CD8-positive, alpha-beta T cell (primary cell): ENCODE measurements at regions of chr6 and their contacts with region 1.

Region 1: GRCh38 chr6:110981202-110981600 is 637 bp upstream of the RPF2 start:
- DNase-seq: peak in 1 of 9 experiments; percentile 49
- ATAC-seq: peak; percentile 1
- H3K4me3 ChIP-seq: peak overlapping the region; percentile 85 to 95
- H3K4me3 Mint-ChIP-seq: peak overlapping the region; percentile 99
- H3K27ac ChIP-seq: peak overlapping the region; percentile 90 to 97
- H3K27ac Mint-ChIP-seq: peak overlapping the region; percentile 100
- H3K4me1 ChIP-seq: peaks cover 6% of the 10 kb centered on the region
- H3K4me1 Mint-ChIP-seq: peaks cover 45% of the 10 kb centered on the region
- H3K27me3 ChIP-seq: no peaks in the 10 kb centered on the region
- H3K27me3 Mint-ChIP-seq: no peaks in the 10 kb centered on the region
- CTCF ChIP-seq: no peak

Region 2: DNA sequence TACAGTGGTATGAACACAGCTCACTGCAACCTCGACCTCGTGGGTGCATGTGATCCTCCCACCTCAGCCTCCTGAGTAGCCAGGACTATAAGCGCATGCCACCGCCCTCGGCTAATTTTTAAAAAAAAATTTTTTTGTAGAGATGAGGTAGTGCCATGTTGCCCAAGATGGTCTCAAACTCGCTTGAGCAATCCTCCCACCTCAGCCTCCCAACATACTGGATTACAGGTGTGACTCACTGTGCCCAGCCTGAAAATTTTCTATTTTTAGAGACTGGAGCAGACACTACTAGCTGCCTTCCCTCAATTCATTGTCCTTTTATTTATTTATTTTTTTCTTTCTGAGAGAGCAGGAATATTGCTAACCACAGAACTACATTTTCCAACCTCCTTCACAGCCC is 43.0 kb before region 1 on chr6:
- CTCF ChIA-PET with region 1: no interaction called
- POLR2A ChIA-PET with region 1: no interaction called
- intact Hi-C with region 1: no loop called
- DNase-seq: no peak
- ATAC-seq: no peak
- H3K4me3 ChIP-seq: no peak overlapping the region
- H3K4me3 Mint-ChIP-seq: no peak overlapping the region
- H3K27ac ChIP-seq: no peak overlapping the region
- H3K27ac Mint-ChIP-seq: no peak overlapping the region
- H3K4me1 ChIP-seq: no peaks in the 10 kb centered on the region
- H3K4me1 Mint-ChIP-seq: no peaks in the 10 kb centered on the region
- H3K27me3 ChIP-seq: no peaks in the 10 kb centered on the region
- H3K27me3 Mint-ChIP-seq: peaks cover 2% of the 10 kb centered on the region
- CTCF ChIP-seq: no peak

Region 3: DNA sequence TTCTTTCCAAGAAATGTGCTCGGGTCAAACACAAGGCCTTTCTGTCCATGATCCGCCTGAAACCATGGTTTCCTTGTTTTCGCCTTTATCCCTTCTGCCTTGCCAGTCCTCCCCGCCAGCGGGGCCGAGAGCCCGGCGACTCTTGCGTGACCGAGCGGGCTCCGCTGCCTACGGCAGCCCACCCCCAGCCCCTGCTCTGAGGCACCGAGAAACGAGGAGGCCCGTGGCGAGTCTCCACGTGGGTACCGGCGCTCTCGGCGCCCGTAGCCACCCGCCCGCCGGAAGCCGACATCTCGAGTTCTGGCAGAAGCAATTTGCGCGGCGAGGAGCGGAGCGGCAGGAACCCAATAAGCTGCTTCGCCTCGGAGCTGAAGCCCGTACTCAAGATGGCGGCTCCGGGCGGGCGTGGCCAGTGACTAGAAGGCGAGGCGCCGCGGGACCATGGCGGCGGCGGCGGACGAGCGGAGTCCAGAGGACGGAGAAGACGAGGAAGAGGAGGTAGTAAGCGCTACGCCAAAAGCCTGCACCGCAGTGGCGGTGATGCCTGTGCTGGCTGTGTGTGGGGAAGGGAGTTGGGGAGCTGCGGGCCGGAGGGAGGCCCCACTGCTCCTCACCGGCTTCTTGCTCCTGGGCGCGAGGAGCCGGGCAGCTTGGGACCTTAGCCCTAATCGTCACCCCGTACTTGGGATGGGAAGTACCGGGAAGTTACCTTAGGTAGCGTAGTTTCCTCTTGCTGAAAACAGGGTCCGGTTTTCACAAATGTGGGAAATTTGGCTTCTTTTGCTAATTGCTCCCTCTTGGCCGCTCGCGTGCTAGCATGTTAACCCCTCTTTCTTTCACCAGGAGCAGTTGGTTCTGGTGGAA is 22.6 kb before region 1 on chr6 and contains the start of gene GTF3C6:
- CTCF ChIA-PET with region 1: interaction called, 5 read pairs
- POLR2A ChIA-PET with region 1: interaction called, 44 read pairs
- intact Hi-C with region 1: loop called (anchors 1 kb)
- DNase-seq: peak; percentile 81 to 95 (median 93)
- ATAC-seq: peak; percentile 99
- H3K4me3 ChIP-seq: peak within 1 kb of the TSS; percentile 97 to 99
- H3K4me3 Mint-ChIP-seq: peak within 1 kb of the TSS; percentile 100
- H3K27ac ChIP-seq: peak within 1 kb of the TSS; percentile 91 to 92
- H3K27ac Mint-ChIP-seq: peak within 1 kb of the TSS; percentile 100
- H3K4me1 ChIP-seq: peaks cover 5% of the 10 kb centered on the region
- H3K4me1 Mint-ChIP-seq: peaks cover 21% of the 10 kb centered on the region
- H3K27me3 ChIP-seq: no peaks in the 10 kb centered on the region
- H3K27me3 Mint-ChIP-seq: peaks cover 5% of the 10 kb centered on the region
- CTCF ChIP-seq: no peak
- total RNA-seq, gene GTF3C6: 25.0 to 26.3 TPM

Region 4: GRCh38 chr6:111047244-111047643 is 66.0 kb after region 1 on chr6:
- CTCF ChIA-PET with region 1: no interaction called
- POLR2A ChIA-PET with region 1: no interaction called
- intact Hi-C with region 1: no loop called
- DNase-seq: no peak
- ATAC-seq: no peak
- H3K4me3 ChIP-seq: no peak overlapping the region
- H3K4me3 Mint-ChIP-seq: no peak overlapping the region
- H3K27ac ChIP-seq: no peak overlapping the region
- H3K27ac Mint-ChIP-seq: no peak overlapping the region
- H3K4me1 ChIP-seq: no peaks in the 10 kb centered on the region
- H3K4me1 Mint-ChIP-seq: no peaks in the 10 kb centered on the region
- H3K27me3 ChIP-seq: no peaks in the 10 kb centered on the region
- H3K27me3 Mint-ChIP-seq: peaks cover 2% of the 10 kb centered on the region
- CTCF ChIP-seq: no peak

Region 5: DNA sequence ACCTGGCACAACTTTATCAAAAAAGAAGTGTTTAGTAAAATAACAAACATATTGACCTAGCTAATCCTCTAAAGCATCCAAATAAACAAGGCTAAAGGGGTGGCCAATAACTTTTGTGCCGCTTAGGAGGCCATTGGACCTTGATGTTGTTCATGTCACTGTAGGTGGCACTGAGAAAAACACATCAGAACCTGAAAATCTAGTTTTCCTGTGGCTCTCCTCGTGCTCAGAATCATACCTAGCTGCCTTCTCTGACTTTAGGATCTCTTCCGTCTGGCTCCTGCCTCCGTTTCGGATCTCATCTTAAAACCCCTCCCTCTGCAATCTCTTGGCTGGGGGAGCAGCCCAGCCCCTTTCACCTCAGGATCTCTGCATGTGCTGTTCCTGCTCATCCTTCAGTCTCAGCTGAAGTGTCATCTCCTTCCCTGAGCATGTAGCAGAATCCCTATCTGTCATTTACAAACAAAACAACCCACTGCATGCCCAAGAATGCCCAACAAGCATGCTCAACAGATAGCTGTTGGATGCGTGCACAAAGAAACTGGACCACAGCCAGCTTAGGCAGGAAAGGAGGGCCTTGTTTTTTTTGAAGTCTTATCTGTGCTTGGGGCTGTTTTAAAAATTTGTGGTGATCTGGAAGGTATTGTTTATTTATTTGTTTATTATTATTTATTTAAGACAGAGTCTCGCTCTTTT is 87.5 kb after region 1 on chr6:
- CTCF ChIA-PET with region 1: no interaction called
- POLR2A ChIA-PET with region 1: no interaction called
- intact Hi-C with region 1: no loop called
- DNase-seq: no peak
- ATAC-seq: no peak
- H3K4me3 ChIP-seq: no peak overlapping the region
- H3K4me3 Mint-ChIP-seq: no peak overlapping the region
- H3K27ac ChIP-seq: no peak overlapping the region
- H3K27ac Mint-ChIP-seq: no peak overlapping the region
- H3K4me1 ChIP-seq: no peaks in the 10 kb centered on the region
- H3K4me1 Mint-ChIP-seq: no peaks in the 10 kb centered on the region
- H3K27me3 ChIP-seq: no peaks in the 10 kb centered on the region
- H3K27me3 Mint-ChIP-seq: peaks cover 9% of the 10 kb centered on the region
- CTCF ChIP-seq: no peak

Region 6: GRCh38 chr6:111306104-111306888 is 325.1 kb after region 1 on chr6:
- CTCF ChIA-PET with region 1: no interaction called
- POLR2A ChIA-PET with region 1: no interaction called
- intact Hi-C with region 1: no loop called
- DNase-seq: no peak
- ATAC-seq: no peak
- H3K4me3 ChIP-seq: no peak overlapping the region
- H3K4me3 Mint-ChIP-seq: no peak overlapping the region
- H3K27ac ChIP-seq: no peak overlapping the region
- H3K27ac Mint-ChIP-seq: no peak overlapping the region
- H3K4me1 ChIP-seq: no peaks in the 10 kb centered on the region
- H3K4me1 Mint-ChIP-seq: peaks cover 4% of the 10 kb centered on the region
- H3K27me3 ChIP-seq: no peaks in the 10 kb centered on the region
- H3K27me3 Mint-ChIP-seq: no peaks in the 10 kb centered on the region
- CTCF ChIP-seq: no peak